ENCODE measurements at regions of chr11 and their contacts with region 1.

Region 1: GRCh38 chr11:10792398-10792975 is 16.2 kb downstream of the EIF4G2 start:
- DNase-seq: peak; percentile 87 to 94 (median 92)
- ATAC-seq: peak; percentile 91 to 96 (median 92)
- H3K4me3 ChIP-seq: peak overlapping the region in 5 of 12 donors; percentile 3 to 41 (median 10)
- H3K27ac ChIP-seq: no peak overlapping the region
- H3K4me1 ChIP-seq: peaks cover 0 to 17% (median 5%) of the 10 kb centered on the region in 12 donors
- H3K27me3 ChIP-seq: no peaks in the 10 kb centered on the region
- CTCF ChIP-seq: peak; percentile 85 to 98 (median 92)
- POLR2A ChIP-seq: no peak

Region 2: GRCh38 chr11:10906513-10906912 is 114.0 kb after region 1 on chr11:
- intact Hi-C with region 1: loop called in 5 of 10 experiments (anchors 5 kb)
- DNase-seq: no peak
- ATAC-seq: peak in 3 of 4 donors; percentile 35 to 60 (median 40)
- H3K4me3 ChIP-seq: no peak overlapping the region
- H3K27ac ChIP-seq: no peak overlapping the region
- H3K4me1 ChIP-seq: peaks cover 0 to 22% (median 3%) of the 10 kb centered on the region in 12 donors
- H3K27me3 ChIP-seq: no peaks in the 10 kb centered on the region
- CTCF ChIP-seq: peak in 9 of 12 donors; percentile 7 to 47 (median 26)
- POLR2A ChIP-seq: no peak

Region 3: GRCh38 chr11:10920205-10920604 is 127.7 kb after region 1 on chr11:
- intact Hi-C with region 1: loop called in 1 of 10 experiments (anchors 10 kb)
- DNase-seq: no peak
- ATAC-seq: no peak
- H3K4me3 ChIP-seq: no peak overlapping the region
- H3K27ac ChIP-seq: no peak overlapping the region
- H3K4me1 ChIP-seq: peaks cover 0 to 3% (median 0%) of the 10 kb centered on the region in 12 donors
- H3K27me3 ChIP-seq: no peaks in the 10 kb centered on the region
- CTCF ChIP-seq: no peak
- POLR2A ChIP-seq: no peak

Region 4: DNA sequence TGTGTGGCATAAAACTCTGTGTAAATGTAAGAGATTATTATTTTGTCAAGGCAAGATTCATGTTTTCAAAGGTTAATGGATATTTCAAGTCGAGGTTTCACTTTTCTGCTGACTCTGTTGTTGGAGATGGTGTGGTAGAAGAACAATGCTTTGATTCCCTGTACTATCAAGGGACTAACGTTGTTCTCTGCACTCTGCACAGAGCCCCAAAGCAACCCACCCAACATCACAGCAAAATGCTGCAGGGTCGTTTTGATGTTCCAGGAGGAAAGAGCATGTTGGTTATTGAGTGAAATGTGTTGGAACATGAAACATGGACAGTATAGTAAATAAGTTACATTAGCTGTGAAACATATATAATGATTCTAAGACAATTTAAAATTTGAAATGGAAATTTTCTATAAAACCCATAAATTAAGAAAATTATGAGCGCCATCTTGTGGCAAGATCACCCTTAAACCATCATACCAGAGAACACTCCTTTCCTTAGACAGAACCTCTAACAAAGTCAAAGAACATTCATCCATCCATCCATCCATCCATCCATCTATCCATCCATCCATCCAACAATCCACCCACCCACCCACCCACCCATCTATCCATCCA is 229.7 kb after region 1 on chr11:
- intact Hi-C with region 1: loop called (anchors 2 to 5 kb)
- DNase-seq: no peak
- ATAC-seq: peak in 1 of 4 donors; percentile 33
- H3K4me3 ChIP-seq: no peak overlapping the region
- H3K27ac ChIP-seq: no peak overlapping the region
- H3K4me1 ChIP-seq: no peaks in the 10 kb centered on the region
- H3K27me3 ChIP-seq: no peaks in the 10 kb centered on the region
- CTCF ChIP-seq: peak; percentile 29 to 68 (median 58)
- POLR2A ChIP-seq: no peak

Region 5: GRCh38 chr11:11798586-11799438 is 1006.3 kb after region 1 on chr11:
- intact Hi-C with region 1: loop called in 1 of 10 experiments (anchors 10 kb)
- DNase-seq: peak; percentile 71 to 89 (median 83)
- ATAC-seq: peak; percentile 83 to 93 (median 90)
- H3K4me3 ChIP-seq: no peak overlapping the region
- H3K27ac ChIP-seq: no peak overlapping the region
- H3K4me1 ChIP-seq: peaks cover 0 to 6% (median 0%) of the 10 kb centered on the region in 12 donors
- H3K27me3 ChIP-seq: peaks cover 0 to 3% (median 0%) of the 10 kb centered on the region in 9 donors
- CTCF ChIP-seq: peak; percentile 86 to 98 (median 94)
- POLR2A ChIP-seq: no peak